K562 (cell line): ENCODE measurements at regions of chr3 and their contacts with region 1.

Region 1: DNA sequence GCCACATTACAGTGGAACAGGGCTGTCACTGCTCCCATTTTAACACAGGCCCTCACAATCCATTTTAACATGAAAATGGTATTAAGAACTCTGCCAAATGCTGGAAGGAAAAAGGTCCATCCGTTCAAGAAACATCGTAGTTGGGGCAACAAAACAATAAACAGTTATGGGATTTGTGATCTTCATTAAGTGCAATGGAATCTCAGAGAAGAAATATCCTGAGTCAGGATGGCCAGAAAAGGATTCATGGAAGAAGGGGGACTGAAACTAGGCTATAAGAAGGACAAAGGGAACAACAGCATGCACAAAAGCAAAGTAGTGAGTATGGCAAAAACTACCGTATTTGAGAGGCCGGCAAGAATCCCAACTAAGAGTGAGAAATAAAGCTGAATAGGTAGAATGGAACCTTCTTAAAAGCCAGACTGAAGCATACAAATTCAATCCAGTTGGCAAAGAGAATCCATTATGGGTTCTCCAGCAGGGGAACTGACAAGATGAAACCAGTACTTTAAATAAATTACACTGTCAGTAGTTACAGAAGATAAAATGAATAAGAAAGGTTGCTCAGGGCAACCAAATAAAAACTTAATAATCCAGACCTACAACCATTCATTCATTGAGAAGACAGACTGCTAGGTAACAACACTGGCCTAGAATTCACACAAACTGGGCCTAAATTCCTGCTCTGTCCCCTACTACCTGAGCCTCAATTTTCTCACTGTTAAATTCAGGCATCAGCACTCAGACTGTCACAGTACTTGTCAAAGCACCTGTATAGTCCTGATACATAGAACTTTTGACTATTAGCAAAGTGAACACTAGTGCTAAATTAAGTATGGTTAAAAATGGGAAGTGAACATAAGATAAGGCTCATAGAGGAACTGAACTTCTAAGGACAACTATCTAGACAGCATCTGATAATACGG is 6.3 kb downstream of the TBL1XR1 start:
- DNase-seq: no peak
- ATAC-seq: peak; percentile 10
- H3K4me3 ChIP-seq: no peak overlapping the region
- H3K27ac ChIP-seq: peak overlapping the region; percentile 24; the same call in 1 of the 3 replicates
- H3K4me1 ChIP-seq: peaks cover 8 to 26% of the 10 kb centered on the region in 2 experiments; a peak in 3 of 5 replicates
- H3K27me3 ChIP-seq: no peaks in the 10 kb centered on the region
- CTCF ChIP-seq: no peak
- EP300 ChIP-seq: no peak
- POLR2A ChIP-seq: no peak; the same call in 1 of the 2 replicates
- RAD21 ChIP-seq: no peak

Region 2: GRCh38 chr3:177069514-177070329 is 121.3 kb before region 1 on chr3:
- CTCF ChIA-PET with region 1: no interaction called
- POLR2A ChIA-PET with region 1: no interaction called
- in situ Hi-C with region 1: no loop called
- intact Hi-C with region 1: loop called (anchors 5 kb)
- DNase-seq: no peak
- ATAC-seq: no peak
- H3K4me3 ChIP-seq: no peak overlapping the region
- H3K27ac ChIP-seq: no peak overlapping the region
- H3K4me1 ChIP-seq: peaks cover 0 to 10% of the 10 kb centered on the region in 2 experiments; a peak in 1 of 5 replicates
- H3K27me3 ChIP-seq: no peaks in the 10 kb centered on the region
- CTCF ChIP-seq: no peak
- EP300 ChIP-seq: no peak
- POLR2A ChIP-seq: no peak
- RAD21 ChIP-seq: no peak

Region 3: DNA sequence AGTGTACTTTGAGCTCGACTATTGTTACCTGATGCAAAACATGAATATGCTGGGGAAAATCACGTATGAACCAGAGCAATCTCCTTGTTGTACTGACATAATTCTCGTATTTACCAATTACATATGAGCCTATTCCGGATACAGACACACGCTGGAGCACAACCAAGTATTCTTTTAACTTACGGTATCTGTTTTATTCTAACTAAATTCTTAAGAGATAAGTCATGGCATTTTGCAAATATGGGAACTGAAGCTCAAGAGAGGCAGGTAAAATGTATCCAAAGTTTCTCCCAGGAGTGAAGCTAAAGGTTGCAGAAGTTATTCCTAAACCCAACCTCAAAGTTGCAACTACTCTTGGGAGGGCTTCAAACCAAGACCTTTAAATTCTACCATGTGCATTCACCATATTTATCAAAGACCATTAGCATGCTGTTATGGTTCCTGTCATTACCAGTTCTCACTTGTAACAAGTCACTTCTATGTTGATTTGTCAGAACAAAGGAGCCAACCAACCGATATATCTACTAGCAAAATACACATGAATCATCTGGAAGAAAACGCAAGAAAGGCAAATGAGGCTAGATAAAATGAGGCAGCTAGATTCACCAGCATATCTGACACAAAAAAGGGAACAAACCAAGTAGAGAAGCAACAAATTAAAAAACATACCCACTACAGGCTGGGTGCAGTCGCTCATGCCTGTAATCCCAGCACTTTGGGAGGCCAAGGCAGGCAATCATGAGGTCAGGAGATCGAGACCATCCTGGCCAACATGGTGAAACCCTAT is 11.5 kb before region 1 on chr3:
- CTCF ChIA-PET with region 1: no interaction called
- POLR2A ChIA-PET with region 1: interaction called, 18 read pairs
- in situ Hi-C with region 1: no loop called
- intact Hi-C with region 1: loop called (anchors 2 kb)
- DNase-seq: peak in 1 of 4 experiments; percentile 39
- ATAC-seq: peak; percentile 11
- H3K4me3 ChIP-seq: no peak overlapping the region; the same call in 1 of the 2 replicates
- H3K27ac ChIP-seq: peak overlapping the region; percentile 51
- H3K4me1 ChIP-seq: peaks cover 28 to 34% of the 10 kb centered on the region in 2 experiments; a peak in 4 of 5 replicates
- H3K27me3 ChIP-seq: no peaks in the 10 kb centered on the region
- CTCF ChIP-seq: no peak
- EP300 ChIP-seq: no peak
- POLR2A ChIP-seq: no peak
- RAD21 ChIP-seq: no peak